ENCODE measurements at regions of chr3 and their contacts with region 1.

Region 1: DNA sequence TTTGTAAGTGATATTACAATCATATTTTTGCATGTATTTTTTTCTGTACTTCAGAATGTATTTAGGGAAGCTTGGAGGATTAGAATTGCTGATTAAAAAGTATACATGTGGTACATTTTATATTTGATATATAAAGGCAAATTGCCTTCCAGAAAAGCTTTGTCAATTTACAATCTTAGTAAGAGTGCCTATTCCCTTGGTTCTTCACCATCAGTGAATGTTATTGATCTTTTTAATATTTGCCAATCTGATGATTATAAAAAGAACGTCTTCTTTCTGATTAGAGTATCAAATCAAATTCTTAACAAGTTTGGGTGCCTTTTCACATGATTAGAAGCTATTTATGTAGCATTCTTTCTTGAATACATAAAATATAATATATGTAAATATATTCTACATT is 9.1 kb downstream of the WDR49 start:
- DNase-seq: no peak
- H3K4me3 ChIP-seq: no peak overlapping the region
- H3K27ac ChIP-seq: no peak overlapping the region
- H3K4me1 ChIP-seq: no peaks in the 10 kb centered on the region
- H3K27me3 ChIP-seq: peaks cover 9% of the 10 kb centered on the region
- CTCF ChIP-seq: no peak

Region 2: GRCh38 chr3:167611718-167612117 is 32.9 kb before region 1 on chr3:
- CTCF ChIA-PET with region 1: no interaction called
- POLR2A ChIA-PET with region 1: no interaction called
- intact Hi-C with region 1: loop called (anchors 2 kb)
- DNase-seq: no peak
- H3K4me3 ChIP-seq: no peak overlapping the region
- H3K27ac ChIP-seq: no peak overlapping the region
- H3K4me1 ChIP-seq: no peaks in the 10 kb centered on the region
- H3K27me3 ChIP-seq: peaks cover 3% of the 10 kb centered on the region
- CTCF ChIP-seq: no peak